Caco-2 (cell line): ENCODE measurements at regions of chr9 and their contacts with region 1.

Region 1: GRCh38 chr9:92140074-92140753 is 25.0 kb upstream of the SPTLC1 start:
- DNase-seq: peak; percentile 77 to 82
- H3K4me3 ChIP-seq: peak overlapping the region; percentile 19; the same call in 1 of the 2 replicates
- H3K4me3 Mint-ChIP-seq: peak overlapping the region; percentile 71
- H3K27ac Mint-ChIP-seq: no peak overlapping the region
- H3K4me1 ChIP-seq: no peaks in the 10 kb centered on the region
- H3K4me1 Mint-ChIP-seq: peaks cover 6% of the 10 kb centered on the region
- H3K27me3 ChIP-seq: no peaks in the 10 kb centered on the region
- H3K27me3 Mint-ChIP-seq: no peaks in the 10 kb centered on the region
- CTCF ChIP-seq: peak; percentile 73 to 81

Region 2: GRCh38 chr9:92206488-92206887 is 66.3 kb after region 1 on chr9:
- CTCF ChIA-PET with region 1: no interaction called
- POLR2A ChIA-PET with region 1: no interaction called
- intact Hi-C with region 1: loop called (anchors 5 kb)
- DNase-seq: no peak
- H3K4me3 ChIP-seq: no peak overlapping the region
- H3K4me3 Mint-ChIP-seq: no peak overlapping the region
- H3K27ac Mint-ChIP-seq: no peak overlapping the region
- H3K4me1 ChIP-seq: no peaks in the 10 kb centered on the region
- H3K4me1 Mint-ChIP-seq: no peaks in the 10 kb centered on the region
- H3K27me3 ChIP-seq: no peaks in the 10 kb centered on the region
- H3K27me3 Mint-ChIP-seq: no peaks in the 10 kb centered on the region
- CTCF ChIP-seq: no peak

Region 3: GRCh38 chr9:92234514-92234913 is 94.3 kb after region 1 on chr9:
- CTCF ChIA-PET with region 1: interaction called, 4 read pairs
- POLR2A ChIA-PET with region 1: no interaction called
- intact Hi-C with region 1: loop called (anchors 5 kb)
- DNase-seq: no peak
- H3K4me3 ChIP-seq: no peak overlapping the region
- H3K4me3 Mint-ChIP-seq: no peak overlapping the region
- H3K27ac Mint-ChIP-seq: no peak overlapping the region
- H3K4me1 ChIP-seq: no peaks in the 10 kb centered on the region
- H3K4me1 Mint-ChIP-seq: no peaks in the 10 kb centered on the region
- H3K27me3 ChIP-seq: no peaks in the 10 kb centered on the region
- H3K27me3 Mint-ChIP-seq: no peaks in the 10 kb centered on the region
- CTCF ChIP-seq: no peak

Region 4: GRCh38 chr9:92634712-92635605 is 494.7 kb after region 1 on chr9:
- CTCF ChIA-PET with region 1: no interaction called
- POLR2A ChIA-PET with region 1: no interaction called
- intact Hi-C with region 1: loop called (anchors 5 kb)
- DNase-seq: peak; percentile 64 to 70
- H3K4me3 ChIP-seq: no peak overlapping the region
- H3K4me3 Mint-ChIP-seq: no peak overlapping the region
- H3K27ac Mint-ChIP-seq: no peak overlapping the region
- H3K4me1 ChIP-seq: no peaks in the 10 kb centered on the region
- H3K4me1 Mint-ChIP-seq: no peaks in the 10 kb centered on the region
- H3K27me3 ChIP-seq: no peaks in the 10 kb centered on the region
- H3K27me3 Mint-ChIP-seq: no peaks in the 10 kb centered on the region
- CTCF ChIP-seq: peak; percentile 84 to 89